Cardiac septum (tissue), 1 donor: ENCODE measurements at regions of chr3 and their contacts with region 1.

Region 1: GRCh38 chr3:16884084-16884747 is 539 bp upstream of the PLCL2 start:
- DNase-seq: peak; percentile 87

Region 2: DNA sequence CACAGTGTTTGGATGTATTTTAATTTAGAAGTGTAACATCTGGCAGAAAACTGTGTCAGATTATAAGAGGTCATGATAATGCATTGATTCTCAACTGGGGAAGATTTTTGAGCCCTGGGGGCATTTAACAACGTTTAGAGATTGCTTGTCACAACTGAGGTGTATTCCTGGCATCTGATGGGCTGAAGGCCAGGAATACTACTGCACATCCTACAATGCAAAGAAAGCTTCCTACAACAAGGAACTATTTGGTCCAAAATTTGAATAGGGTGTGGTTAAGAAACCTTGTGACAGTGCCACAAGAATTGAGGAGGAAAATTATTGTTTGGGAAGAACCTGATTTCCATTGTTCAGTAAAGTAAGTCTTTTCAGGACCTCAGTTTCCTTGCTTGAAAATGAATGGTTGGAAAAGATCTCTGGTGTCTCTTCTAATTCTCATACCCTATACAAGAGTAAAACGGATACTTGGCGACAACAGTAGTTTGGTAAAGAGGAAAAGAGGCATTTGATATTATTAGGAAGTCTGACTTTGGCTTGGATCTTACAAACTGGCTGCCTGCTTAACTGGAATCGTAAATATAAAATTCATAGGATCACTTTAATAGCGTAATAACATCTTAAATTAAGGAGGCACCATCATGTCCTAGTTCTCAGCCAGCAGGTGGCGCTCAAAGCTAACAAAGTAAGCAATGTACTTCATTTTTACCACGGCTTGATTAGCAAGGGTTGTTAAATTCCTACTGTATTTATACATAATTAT is 283.3 kb before region 1 on chr3:
- intact Hi-C with region 1: loop called (anchors 5 kb)
- DNase-seq: peak; percentile 85

Region 3: DNA sequence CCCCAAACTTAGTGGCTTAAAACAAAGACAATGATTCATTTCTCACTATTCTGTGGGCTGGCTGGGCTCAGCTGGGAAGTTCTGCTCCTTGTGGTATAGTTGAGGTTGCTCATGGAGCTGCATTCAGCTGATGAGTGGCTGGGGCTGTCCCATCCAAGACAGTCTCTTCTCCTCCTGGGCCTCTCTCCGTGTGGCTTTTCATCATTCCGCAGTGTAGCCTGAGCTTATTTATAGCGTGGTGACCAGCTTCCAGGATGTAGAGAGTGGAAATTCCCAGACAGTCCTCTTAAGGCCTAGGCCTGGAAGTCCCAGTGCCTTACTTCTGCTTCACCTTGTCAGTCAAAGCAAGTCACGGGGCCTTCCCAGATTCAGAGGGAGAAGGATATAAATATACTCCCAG is 142.3 kb before region 1 on chr3:
- intact Hi-C with region 1: loop called (anchors 1 kb)
- DNase-seq: no peak

Region 4: GRCh38 chr3:16768959-16769358 is 115.3 kb before region 1 on chr3:
- intact Hi-C with region 1: loop called (anchors 2 kb)
- DNase-seq: no peak

Region 5: GRCh38 chr3:17039580-17039979 is 155.4 kb after region 1 on chr3:
- intact Hi-C with region 1: loop called (anchors 2 kb)
- DNase-seq: no peak

Region 6: GRCh38 chr3:17140670-17141505 is 256.7 kb after region 1 on chr3:
- intact Hi-C with region 1: loop called (anchors 5 kb)
- DNase-seq: no peak

Region 7: DNA sequence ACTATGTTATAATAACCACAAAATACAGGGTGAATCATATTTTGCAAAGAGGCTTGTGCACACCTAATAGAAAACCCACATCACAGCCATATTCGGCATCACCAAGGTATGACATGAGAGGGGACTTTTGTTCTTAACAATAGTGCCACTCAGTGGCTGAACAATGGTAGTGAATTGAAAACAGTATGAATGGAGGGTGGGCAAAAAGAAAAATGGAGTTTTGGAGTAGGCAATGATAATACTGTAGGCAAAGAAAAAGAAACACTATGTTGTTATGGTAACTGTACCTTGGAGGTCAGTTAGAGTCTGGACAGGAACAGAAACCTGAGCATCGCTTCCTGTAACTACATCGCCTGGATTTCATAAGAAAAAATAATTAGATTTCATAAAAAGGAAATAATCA is 349.2 kb after region 1 on chr3:
- intact Hi-C with region 1: loop called (anchors 10 kb)
- DNase-seq: no peak